ENCODE measurements at regions of chr6 and their contacts with region 1.

Region 1: GRCh38 chr6:163956571-163957407 is 542.3 kb downstream of the QKI start:
- DNase-seq: peak; percentile 77
- ATAC-seq: peak; percentile 74
- H3K4me3 Mint-ChIP-seq: no peak overlapping the region
- H3K27ac Mint-ChIP-seq: no peak overlapping the region
- H3K4me1 Mint-ChIP-seq: no peaks in the 10 kb centered on the region
- H3K27me3 Mint-ChIP-seq: peaks cover 22% of the 10 kb centered on the region

Region 2: GRCh38 chr6:162907876-162908481 is 1048.8 kb before region 1 on chr6:
- CTCF ChIA-PET with region 1: no interaction called
- POLR2A ChIA-PET with region 1: no interaction called
- intact Hi-C with region 1: loop called in 1 of 2 experiments (anchors 2 kb)
- DNase-seq: no peak
- ATAC-seq: no peak
- H3K4me3 Mint-ChIP-seq: no peak overlapping the region
- H3K27ac Mint-ChIP-seq: no peak overlapping the region
- H3K4me1 Mint-ChIP-seq: no peaks in the 10 kb centered on the region
- H3K27me3 Mint-ChIP-seq: no peaks in the 10 kb centered on the region

Region 3: DNA sequence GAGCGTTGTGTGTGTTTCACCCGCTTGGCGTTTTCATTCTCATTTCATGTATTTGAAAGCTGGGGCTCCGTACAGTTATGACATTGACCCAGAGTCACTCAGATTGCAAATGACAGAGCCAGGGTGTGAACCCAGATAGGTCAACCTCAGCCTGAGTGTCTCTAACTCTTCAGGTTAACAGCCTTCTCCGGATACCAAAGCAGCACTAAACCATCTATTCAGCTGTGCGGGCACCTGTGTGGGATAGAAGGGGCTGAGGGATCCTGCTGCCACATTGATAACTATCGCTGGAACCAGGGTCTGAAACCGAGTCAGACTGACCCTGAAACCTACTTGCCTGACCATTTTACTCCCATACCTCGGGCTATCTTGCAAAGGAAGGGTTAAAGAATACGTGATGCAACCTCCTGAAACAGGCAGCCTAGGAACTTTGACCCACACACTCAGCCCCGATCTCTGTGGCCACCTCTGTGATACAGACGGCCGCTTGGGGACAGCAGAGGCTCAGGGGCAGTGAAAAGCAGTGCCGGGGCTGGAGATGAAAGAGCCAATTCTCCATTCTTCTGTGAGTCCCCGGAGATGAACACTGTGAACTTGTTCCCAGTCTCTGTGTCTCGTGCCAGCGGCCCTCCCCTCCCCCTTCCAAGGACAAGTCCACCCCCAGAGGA is 775.8 kb before region 1 on chr6:
- CTCF ChIA-PET with region 1: interaction called, 3 read pairs
- POLR2A ChIA-PET with region 1: no interaction called
- intact Hi-C with region 1: loop called in 1 of 2 experiments (anchors 1 kb)
- DNase-seq: peak; percentile 42
- ATAC-seq: no peak
- H3K4me3 Mint-ChIP-seq: no peak overlapping the region
- H3K27ac Mint-ChIP-seq: no peak overlapping the region
- H3K4me1 Mint-ChIP-seq: no peaks in the 10 kb centered on the region
- H3K27me3 Mint-ChIP-seq: peaks cover 3% of the 10 kb centered on the region

Region 4: DNA sequence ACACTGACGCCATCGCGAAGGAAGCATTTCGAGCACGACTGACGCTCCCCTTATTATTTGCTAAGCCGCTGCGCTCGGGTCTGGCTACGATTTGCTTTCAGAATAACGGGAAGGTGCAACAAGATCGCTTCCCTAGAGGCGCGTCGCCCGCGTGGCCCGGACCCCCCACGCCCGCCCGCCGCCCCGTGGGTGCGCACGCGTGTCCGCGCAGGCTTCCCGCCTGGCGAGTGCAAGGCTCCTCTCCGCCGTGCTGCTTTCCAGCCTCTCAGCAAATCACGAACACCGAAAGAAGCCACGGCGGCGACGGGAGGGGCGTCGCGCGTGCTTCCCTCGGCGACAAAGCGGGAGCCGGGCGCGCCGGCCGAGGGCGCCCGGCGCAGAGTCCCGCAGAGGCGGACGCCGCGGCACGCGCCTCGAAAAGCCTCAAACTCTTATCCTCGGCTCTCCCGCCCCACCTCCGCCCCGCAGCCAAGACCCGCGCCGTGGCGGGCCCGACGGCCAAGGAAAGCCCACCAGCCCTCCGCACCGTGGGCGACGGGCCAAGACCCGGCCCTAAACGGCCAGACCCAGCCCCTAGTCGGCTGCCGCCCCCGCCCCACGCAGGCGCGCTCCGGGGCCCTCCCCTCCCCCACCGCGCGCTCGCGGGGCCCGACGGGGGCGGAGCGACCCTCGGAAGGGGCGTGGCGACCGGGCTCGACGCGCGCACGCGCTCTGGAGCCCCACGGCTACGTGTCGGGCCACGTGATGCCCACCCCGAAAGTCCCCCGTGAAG is 543.3 kb before region 1 on chr6:
- CTCF ChIA-PET with region 1: no interaction called
- POLR2A ChIA-PET with region 1: no interaction called
- intact Hi-C with region 1: loop called (anchors 2 kb)
- DNase-seq: peak; percentile 92
- ATAC-seq: peak; percentile 71
- H3K4me3 Mint-ChIP-seq: peak overlapping the region; percentile 78
- H3K27ac Mint-ChIP-seq: peak overlapping the region; percentile 84
- H3K4me1 Mint-ChIP-seq: peaks cover 18% of the 10 kb centered on the region
- H3K27me3 Mint-ChIP-seq: no peaks in the 10 kb centered on the region

Region 5: DNA sequence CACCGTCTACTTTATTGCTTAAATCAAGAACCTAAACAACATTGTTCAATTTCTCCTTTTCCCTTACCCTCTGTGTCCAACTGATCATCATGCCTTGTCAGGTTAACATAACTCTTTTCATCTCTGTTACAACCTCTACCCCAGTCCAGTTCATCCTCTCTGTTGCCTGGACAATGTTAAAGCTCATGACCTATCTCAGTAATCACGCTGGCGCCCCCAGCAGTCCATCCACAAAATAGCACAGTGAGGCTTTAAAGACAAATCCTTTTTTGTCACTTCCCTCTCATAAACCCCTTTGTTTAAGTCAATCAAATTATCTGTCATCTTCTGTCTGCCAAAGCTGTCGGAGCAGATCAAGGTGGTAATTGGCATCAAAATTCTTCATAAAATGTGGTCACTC is 402.1 kb before region 1 on chr6:
- CTCF ChIA-PET with region 1: interaction called, 4 read pairs
- POLR2A ChIA-PET with region 1: no interaction called
- intact Hi-C with region 1: loop called in 1 of 2 experiments (anchors 10 kb)
- DNase-seq: peak; percentile 81
- ATAC-seq: peak; percentile 78
- H3K4me3 Mint-ChIP-seq: no peak overlapping the region
- H3K27ac Mint-ChIP-seq: no peak overlapping the region
- H3K4me1 Mint-ChIP-seq: peaks cover 7% of the 10 kb centered on the region
- H3K27me3 Mint-ChIP-seq: no peaks in the 10 kb centered on the region

Region 6: GRCh38 chr6:164927288-164928056 is 970.7 kb after region 1 on chr6:
- CTCF ChIA-PET with region 1: no interaction called
- POLR2A ChIA-PET with region 1: no interaction called
- intact Hi-C with region 1: loop called (anchors 5 to 10 kb)
- DNase-seq: peak; percentile 78
- ATAC-seq: peak; percentile 60
- H3K4me3 Mint-ChIP-seq: no peak overlapping the region
- H3K27ac Mint-ChIP-seq: no peak overlapping the region
- H3K4me1 Mint-ChIP-seq: no peaks in the 10 kb centered on the region
- H3K27me3 Mint-ChIP-seq: no peaks in the 10 kb centered on the region